CD8-positive, alpha-beta T cell (primary cell): ENCODE measurements at regions of chr1 and their contacts with region 1.

Region 1: GRCh38 chr1:45011837-45012638 is at the start of gene UROD:
- DNase-seq: peak; percentile 77 to 96 (median 86)
- ATAC-seq: peak; percentile 83
- H3K4me3 ChIP-seq: peak within 1 kb of the TSS; percentile 56 to 82
- H3K4me3 Mint-ChIP-seq: peak within 1 kb of the TSS; percentile 89
- H3K27ac ChIP-seq: peak within 1 kb of the TSS; percentile 61 to 77
- H3K27ac Mint-ChIP-seq: peak within 1 kb of the TSS; percentile 95
- H3K4me1 ChIP-seq: peaks cover 30% of the 10 kb centered on the region
- H3K4me1 Mint-ChIP-seq: peaks cover 52% of the 10 kb centered on the region
- H3K27me3 ChIP-seq: no peaks in the 10 kb centered on the region
- H3K27me3 Mint-ChIP-seq: no peaks in the 10 kb centered on the region
- CTCF ChIP-seq: no peak
- total RNA-seq, gene UROD: 38.3 to 41.2 TPM

Region 2: GRCh38 chr1:44354840-44355581 is 657.0 kb before region 1 on chr1 and contains the start of gene ERI3:
- CTCF ChIA-PET with region 1: no interaction called
- POLR2A ChIA-PET with region 1: no interaction called
- intact Hi-C with region 1: loop called in 1 of 2 experiments (anchors 10 kb)
- DNase-seq: peak; percentile 91 to 98 (median 96)
- ATAC-seq: peak; percentile 99
- H3K4me3 ChIP-seq: peak within 1 kb of the TSS; percentile 56 to 64
- H3K4me3 Mint-ChIP-seq: peak within 1 kb of the TSS; percentile 95
- H3K27ac ChIP-seq: peak within 1 kb of the TSS; percentile 37 to 60
- H3K27ac Mint-ChIP-seq: peak within 1 kb of the TSS; percentile 93
- H3K4me1 ChIP-seq: peaks cover 20% of the 10 kb centered on the region
- H3K4me1 Mint-ChIP-seq: peaks cover 38% of the 10 kb centered on the region
- H3K27me3 ChIP-seq: no peaks in the 10 kb centered on the region
- H3K27me3 Mint-ChIP-seq: no peaks in the 10 kb centered on the region
- CTCF ChIP-seq: no peak
- total RNA-seq, gene ERI3: 17.3 to 20.0 TPM

Region 3: GRCh38 chr1:44786138-44786840 is 225.7 kb before region 1 on chr1:
- CTCF ChIA-PET with region 1: interaction called, 5 read pairs
- POLR2A ChIA-PET with region 1: interaction called, 4 read pairs
- intact Hi-C with region 1: loop called (anchors 1 to 5 kb)
- DNase-seq: peak in 8 of 9 experiments; percentile 63 to 89 (median 78)
- ATAC-seq: peak; percentile 85
- H3K4me3 ChIP-seq: peak overlapping the region; percentile 56 to 94
- H3K4me3 Mint-ChIP-seq: peak overlapping the region; percentile 82
- H3K27ac ChIP-seq: peak overlapping the region; percentile 33 to 63
- H3K27ac Mint-ChIP-seq: peak overlapping the region; percentile 86
- H3K4me1 ChIP-seq: peaks cover 34% of the 10 kb centered on the region
- H3K4me1 Mint-ChIP-seq: peaks cover 29% of the 10 kb centered on the region
- H3K27me3 ChIP-seq: no peaks in the 10 kb centered on the region
- H3K27me3 Mint-ChIP-seq: no peaks in the 10 kb centered on the region
- CTCF ChIP-seq: peak; percentile 100

Region 4: GRCh38 chr1:44985747-44986359 is 26.2 kb before region 1 on chr1:
- CTCF ChIA-PET with region 1: interaction called, 26 read pairs
- POLR2A ChIA-PET with region 1: interaction called, 36 read pairs
- intact Hi-C with region 1: loop called (anchors 1 kb)
- DNase-seq: no peak
- ATAC-seq: no peak
- H3K4me3 ChIP-seq: peak overlapping the region; percentile 70 to 85
- H3K4me3 Mint-ChIP-seq: peak overlapping the region; percentile 97
- H3K27ac ChIP-seq: peak overlapping the region; percentile 31 to 42
- H3K27ac Mint-ChIP-seq: peak overlapping the region; percentile 93
- H3K4me1 ChIP-seq: peaks cover 15% of the 10 kb centered on the region
- H3K4me1 Mint-ChIP-seq: peaks cover 30% of the 10 kb centered on the region
- H3K27me3 ChIP-seq: no peaks in the 10 kb centered on the region
- H3K27me3 Mint-ChIP-seq: no peaks in the 10 kb centered on the region
- CTCF ChIP-seq: no peak

Region 5: DNA sequence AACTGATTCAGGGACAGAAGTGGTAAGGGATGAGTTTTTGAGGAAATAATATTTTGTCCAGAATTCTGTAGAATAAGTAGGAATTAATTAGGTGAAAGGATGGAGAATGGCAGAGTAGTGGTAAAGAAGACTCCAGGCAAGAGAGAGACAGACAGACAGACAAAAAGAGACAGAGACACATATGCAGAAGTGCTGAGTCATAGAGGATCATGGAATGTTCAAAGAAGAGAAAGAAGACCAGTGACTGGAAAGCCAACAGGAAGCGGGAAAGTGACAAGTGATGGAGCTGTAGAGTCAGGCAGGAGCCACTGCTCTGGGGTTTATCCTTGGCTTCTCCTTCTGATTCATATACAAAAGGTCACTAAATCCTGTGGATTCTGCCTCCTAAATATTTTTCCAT is 85.9 kb after region 1 on chr1:
- CTCF ChIA-PET with region 1: no interaction called
- POLR2A ChIA-PET with region 1: no interaction called
- intact Hi-C with region 1: no loop called
- DNase-seq: no peak
- ATAC-seq: no peak
- H3K4me3 ChIP-seq: no peak overlapping the region
- H3K4me3 Mint-ChIP-seq: no peak overlapping the region
- H3K27ac ChIP-seq: no peak overlapping the region
- H3K27ac Mint-ChIP-seq: no peak overlapping the region
- H3K4me1 ChIP-seq: no peaks in the 10 kb centered on the region
- H3K4me1 Mint-ChIP-seq: no peaks in the 10 kb centered on the region
- H3K27me3 ChIP-seq: no peaks in the 10 kb centered on the region
- H3K27me3 Mint-ChIP-seq: peaks cover 2% of the 10 kb centered on the region
- CTCF ChIP-seq: no peak

Region 6: GRCh38 chr1:45339789-45340570 is 327.9 kb after region 1 on chr1 and contains the starts of genes MUTYH and TOE1:
- CTCF ChIA-PET with region 1: interaction called, 13 read pairs
- POLR2A ChIA-PET with region 1: interaction called, 42 read pairs
- intact Hi-C with region 1: loop called (anchors 1 kb)
- DNase-seq: peak; percentile 79 to 94 (median 89)
- ATAC-seq: peak; percentile 81
- H3K4me3 ChIP-seq: peak within 1 kb of the TSS; percentile 88 to 94
- H3K4me3 Mint-ChIP-seq: peak within 1 kb of the TSS; percentile 98
- H3K27ac ChIP-seq: peak within 1 kb of the TSS; percentile 97 to 99
- H3K27ac Mint-ChIP-seq: peak within 1 kb of the TSS; percentile 97
- H3K4me1 ChIP-seq: peaks cover 35% of the 10 kb centered on the region
- H3K4me1 Mint-ChIP-seq: peaks cover 50% of the 10 kb centered on the region
- H3K27me3 ChIP-seq: no peaks in the 10 kb centered on the region
- H3K27me3 Mint-ChIP-seq: no peaks in the 10 kb centered on the region
- CTCF ChIP-seq: no peak
- total RNA-seq, gene MUTYH: 53.0 to 62.5 TPM
- total RNA-seq, gene TOE1: 53.8 to 56.5 TPM

Region 7: DNA sequence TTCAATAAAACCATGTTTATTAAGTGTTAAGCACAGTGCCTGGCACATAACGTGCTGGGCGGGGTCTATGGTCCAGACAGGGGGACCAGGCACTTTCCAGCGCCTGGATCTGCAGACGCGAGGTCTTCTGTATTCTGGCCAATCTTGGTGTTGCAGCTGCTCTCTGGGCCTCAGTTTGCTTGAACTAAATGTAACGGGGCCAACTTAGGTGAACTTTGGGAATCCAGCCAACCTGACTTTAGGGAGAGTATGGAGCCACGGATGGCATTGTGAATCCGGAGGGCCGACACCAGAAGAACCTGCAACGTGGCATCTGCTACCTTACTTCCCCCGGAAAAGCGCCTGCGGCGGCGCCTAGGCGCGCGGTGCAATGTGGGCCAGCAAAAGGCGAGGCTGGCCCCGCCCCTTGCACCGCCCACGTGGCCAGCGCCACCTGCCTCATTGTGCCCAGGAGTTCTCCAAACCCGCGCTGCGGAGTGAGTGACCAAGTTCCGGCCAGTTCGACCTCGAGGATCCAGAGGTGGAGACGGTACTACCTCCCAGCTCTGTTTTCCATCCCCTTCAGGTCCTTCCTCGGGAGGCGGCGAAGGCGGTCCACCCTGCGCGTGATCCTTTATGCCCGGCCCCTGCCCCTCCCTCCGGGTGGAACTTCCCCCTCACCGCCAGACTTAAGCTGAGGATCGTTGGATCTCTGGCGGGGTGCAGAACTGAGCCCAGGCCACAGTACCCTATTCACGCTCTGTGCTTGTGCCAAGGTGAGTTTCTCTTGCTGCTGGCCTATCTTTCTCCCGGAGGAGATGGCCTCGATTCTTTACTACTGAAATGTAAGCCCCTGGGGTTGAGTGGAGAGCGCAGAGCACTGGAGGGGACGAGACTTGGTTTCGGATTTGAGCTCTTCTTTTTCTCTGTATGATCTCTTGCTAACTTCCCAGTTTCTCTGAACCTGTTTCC is 538.6 kb after region 1 on chr1 and contains the start of gene AKR1A1:
- CTCF ChIA-PET with region 1: no interaction called
- POLR2A ChIA-PET with region 1: no interaction called
- intact Hi-C with region 1: loop called in 1 of 2 experiments (anchors 1 kb)
- DNase-seq: peak; percentile 71 to 93 (median 83)
- ATAC-seq: peak; percentile 94
- H3K4me3 ChIP-seq: peak within 1 kb of the TSS; percentile 85 to 96
- H3K4me3 Mint-ChIP-seq: peak within 1 kb of the TSS; percentile 95
- H3K27ac ChIP-seq: peak within 1 kb of the TSS; percentile 76 to 91
- H3K27ac Mint-ChIP-seq: peak within 1 kb of the TSS; percentile 93
- H3K4me1 ChIP-seq: peaks cover 16% of the 10 kb centered on the region
- H3K4me1 Mint-ChIP-seq: peaks cover 23% of the 10 kb centered on the region
- H3K27me3 ChIP-seq: no peaks in the 10 kb centered on the region
- H3K27me3 Mint-ChIP-seq: no peaks in the 10 kb centered on the region
- CTCF ChIP-seq: no peak
- total RNA-seq, gene AKR1A1: 27.2 to 31.9 TPM

Region 8: DNA sequence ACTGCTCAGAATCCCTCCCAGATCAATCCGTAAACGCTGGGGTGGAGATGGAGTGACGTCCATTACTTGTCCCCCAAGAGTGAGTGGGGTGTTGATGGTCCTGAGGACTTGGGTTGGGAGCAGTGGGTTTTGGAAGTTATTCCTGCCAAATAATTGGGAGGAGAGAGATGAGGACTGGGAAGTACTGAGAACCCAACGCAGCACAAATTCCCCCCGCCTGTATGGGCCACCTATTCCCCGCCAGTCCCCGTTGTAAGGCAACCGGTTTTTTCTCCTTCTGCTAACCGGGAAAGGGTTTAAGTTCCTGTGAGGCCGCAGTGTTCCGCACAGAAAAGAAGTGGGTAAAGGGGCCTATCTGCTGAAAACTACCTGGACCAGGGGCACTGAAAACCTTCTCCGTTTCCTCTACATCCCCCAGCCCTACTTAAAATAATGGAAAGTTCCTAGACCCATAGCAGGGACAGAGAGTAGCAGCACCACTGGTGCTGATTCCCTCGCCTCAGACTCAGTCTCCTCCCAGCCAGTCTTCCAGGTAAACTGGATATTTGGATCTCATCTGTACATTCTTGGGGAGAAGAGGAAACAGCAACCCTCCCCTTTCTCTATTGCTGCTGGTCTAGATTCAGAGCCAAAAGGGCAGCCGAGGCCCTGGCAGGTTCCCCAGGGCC is 1191.8 kb after region 1 on chr1:
- CTCF ChIA-PET with region 1: no interaction called
- POLR2A ChIA-PET with region 1: no interaction called
- intact Hi-C with region 1: loop called in 1 of 2 experiments (anchors 10 kb)
- DNase-seq: no peak
- ATAC-seq: no peak
- H3K4me3 ChIP-seq: peak overlapping the region; percentile 48 to 58
- H3K4me3 Mint-ChIP-seq: peak overlapping the region; percentile 83
- H3K27ac ChIP-seq: no peak overlapping the region
- H3K27ac Mint-ChIP-seq: no peak overlapping the region
- H3K4me1 ChIP-seq: peaks cover 11% of the 10 kb centered on the region
- H3K4me1 Mint-ChIP-seq: peaks cover 17% of the 10 kb centered on the region
- H3K27me3 ChIP-seq: peaks cover 0 to 3% of the 10 kb centered on the region in 2 experiments
- H3K27me3 Mint-ChIP-seq: no peaks in the 10 kb centered on the region
- CTCF ChIP-seq: no peak